Heart right ventricle (tissue), 16 donors: ENCODE measurements at regions of chr9 and their contacts with region 1.

Region 1: GRCh38 chr9:137470785-137471184 is 11.7 kb upstream of the NSMF start:
- DNase-seq: no peak
- ATAC-seq: no peak
- H3K4me3 ChIP-seq: no peak overlapping the region
- H3K27ac ChIP-seq: no peak overlapping the region
- H3K4me1 ChIP-seq: no peaks in the 10 kb centered on the region
- H3K27me3 ChIP-seq: no peaks in the 10 kb centered on the region
- CTCF ChIP-seq: no peak

Region 2: GRCh38 chr9:137639303-137640051 is 168.7 kb after region 1 on chr9:
- intact Hi-C with region 1: loop called in 1 of 10 experiments (anchors 5 kb)
- DNase-seq: no peak
- ATAC-seq: peak in 2 of 8 donors; percentile 49 to 52
- H3K4me3 ChIP-seq: peak overlapping the region in 6 of 10 donors; percentile 6 to 30 (median 16)
- H3K27ac ChIP-seq: peak overlapping the region in 2 of 10 donors; percentile 1 to 48
- H3K4me1 ChIP-seq: peaks cover 0 to 33% (median 12%) of the 10 kb centered on the region in 9 donors
- H3K27me3 ChIP-seq: no peaks in the 10 kb centered on the region
- CTCF ChIP-seq: no peak